ENCODE measurements at regions of chr6 and their contacts with region 1.

Region 1: GRCh38 chr6:36094753-36095496 is 35.4 kb upstream of the MAPK13 start:
- DNase-seq: peak; percentile 86
- ATAC-seq: peak; percentile 94
- H3K4me3 Mint-ChIP-seq: no peak overlapping the region
- H3K27ac Mint-ChIP-seq: peak overlapping the region; percentile 45
- H3K4me1 Mint-ChIP-seq: peaks cover 21% of the 10 kb centered on the region
- H3K27me3 Mint-ChIP-seq: no peaks in the 10 kb centered on the region

Region 2: DNA sequence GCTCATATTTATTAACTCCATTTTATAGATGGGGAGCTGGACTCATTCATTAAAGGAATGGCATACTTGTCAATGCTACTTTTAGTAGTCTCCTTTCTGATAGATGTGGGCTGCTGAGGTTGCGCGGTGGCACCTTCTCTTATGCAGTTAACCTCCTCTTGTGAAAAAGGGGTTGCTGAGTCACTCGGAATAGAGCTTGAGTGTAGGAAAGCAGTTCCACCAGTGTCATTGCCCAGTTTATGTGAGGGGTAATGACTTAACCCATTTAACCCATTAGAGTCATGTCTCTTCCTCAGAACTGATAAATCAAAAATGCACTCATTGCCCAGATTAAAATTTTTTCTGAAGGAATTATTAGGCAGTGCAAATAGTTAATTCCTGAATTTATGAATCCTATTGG is 61.0 kb before region 1 on chr6:
- CTCF ChIA-PET with region 1: interaction called, 114 read pairs
- DNase-seq: peak; percentile 50
- ATAC-seq: peak; percentile 48
- H3K4me3 Mint-ChIP-seq: no peak overlapping the region
- H3K27ac Mint-ChIP-seq: no peak overlapping the region
- H3K4me1 Mint-ChIP-seq: peaks cover 64% of the 10 kb centered on the region
- H3K27me3 Mint-ChIP-seq: no peaks in the 10 kb centered on the region

Region 3: DNA sequence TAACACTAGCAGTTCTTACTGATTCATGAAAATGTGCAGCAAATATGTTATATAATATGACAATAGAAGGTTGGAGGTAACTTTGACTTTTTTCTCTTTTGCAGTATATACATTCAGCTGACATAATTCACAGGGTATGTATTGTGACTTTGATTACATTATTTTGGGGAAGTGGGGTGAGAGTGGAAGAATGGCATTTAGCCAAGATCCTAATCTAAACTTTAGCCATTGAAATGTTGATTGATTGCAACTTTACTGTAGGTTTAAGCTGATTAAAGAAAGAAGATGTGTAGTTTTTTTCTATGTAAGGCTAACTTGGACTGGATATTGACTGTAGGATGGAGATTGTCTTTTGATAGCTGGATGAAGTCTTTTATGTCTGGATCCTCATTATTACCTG is 21.3 kb before region 1 on chr6:
- CTCF ChIA-PET with region 1: interaction called, 15 read pairs
- DNase-seq: no peak
- ATAC-seq: no peak
- H3K4me3 Mint-ChIP-seq: no peak overlapping the region
- H3K27ac Mint-ChIP-seq: no peak overlapping the region
- H3K4me1 Mint-ChIP-seq: no peaks in the 10 kb centered on the region
- H3K27me3 Mint-ChIP-seq: no peaks in the 10 kb centered on the region

Region 4: DNA sequence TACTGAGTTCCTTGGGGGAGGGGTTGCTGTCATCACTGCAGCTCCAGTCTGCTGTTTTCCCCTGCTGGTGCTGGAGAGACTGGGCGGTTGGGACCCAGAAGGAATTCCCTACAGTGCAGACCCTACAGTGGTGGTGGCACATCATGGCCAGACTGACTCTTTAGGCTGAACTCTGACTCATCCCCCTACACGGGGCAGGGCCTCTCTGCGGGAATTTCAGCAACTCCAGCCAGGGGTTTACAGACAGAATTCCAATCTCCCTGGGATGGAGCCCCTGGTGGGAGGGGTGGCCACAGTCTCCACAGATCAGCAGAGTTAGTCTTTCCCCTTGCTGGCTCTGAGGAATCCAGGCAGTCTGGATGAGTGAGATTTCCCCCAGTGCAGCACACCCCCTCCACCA is 11.5 kb before region 1 on chr6:
- CTCF ChIA-PET with region 1: interaction called, 26 read pairs
- DNase-seq: no peak
- ATAC-seq: no peak
- H3K4me3 Mint-ChIP-seq: no peak overlapping the region
- H3K27ac Mint-ChIP-seq: no peak overlapping the region
- H3K4me1 Mint-ChIP-seq: no peaks in the 10 kb centered on the region
- H3K27me3 Mint-ChIP-seq: no peaks in the 10 kb centered on the region

Region 5: GRCh38 chr6:36114798-36115408 is 20.0 kb after region 1 on chr6:
- CTCF ChIA-PET with region 1: interaction called, 14 read pairs
- DNase-seq: no peak
- ATAC-seq: peak; percentile 46
- H3K4me3 Mint-ChIP-seq: peak overlapping the region; percentile 38
- H3K27ac Mint-ChIP-seq: peak overlapping the region; percentile 96
- H3K4me1 Mint-ChIP-seq: peaks cover 70% of the 10 kb centered on the region
- H3K27me3 Mint-ChIP-seq: no peaks in the 10 kb centered on the region

Region 6: GRCh38 chr6:36120979-36121786 is 26.3 kb after region 1 on chr6:
- CTCF ChIA-PET with region 1: interaction called, 19 read pairs
- DNase-seq: peak; percentile 87
- ATAC-seq: peak; percentile 52
- H3K4me3 Mint-ChIP-seq: peak overlapping the region; percentile 69
- H3K27ac Mint-ChIP-seq: peak overlapping the region; percentile 99
- H3K4me1 Mint-ChIP-seq: peaks cover 86% of the 10 kb centered on the region
- H3K27me3 Mint-ChIP-seq: no peaks in the 10 kb centered on the region

Region 7: GRCh38 chr6:36131511-36132245 is 36.8 kb after region 1 on chr6:
- CTCF ChIA-PET with region 1: interaction called, 13 read pairs
- DNase-seq: peak; percentile 78
- ATAC-seq: peak; percentile 81
- H3K4me3 Mint-ChIP-seq: peak overlapping the region; percentile 78
- H3K27ac Mint-ChIP-seq: peak overlapping the region; percentile 91
- H3K4me1 Mint-ChIP-seq: peaks cover 42% of the 10 kb centered on the region
- H3K27me3 Mint-ChIP-seq: no peaks in the 10 kb centered on the region

Measured in activated CD8-positive, alpha-beta memory T cell treated with anti-CD3 and anti-CD28 coated beads, Interleukin-2, amount 10 ng/mL, durations not matched to agents 7 days and 5 days (primary cell).